MCF 10A (cell line): ENCODE measurements at regions of chr1 and their contacts with region 1.

Region 1: GRCh38 chr1:98749152-98749756 is 87.7 kb downstream of the SNX7 start:
- DNase-seq: peak; percentile 25
- H3K4me3 Mint-ChIP-seq: no peak overlapping the region
- H3K27ac Mint-ChIP-seq: no peak overlapping the region
- H3K4me1 Mint-ChIP-seq: no peaks in the 10 kb centered on the region
- H3K27me3 Mint-ChIP-seq: no peaks in the 10 kb centered on the region
- CTCF ChIP-seq: peak; percentile 37

Region 2: DNA sequence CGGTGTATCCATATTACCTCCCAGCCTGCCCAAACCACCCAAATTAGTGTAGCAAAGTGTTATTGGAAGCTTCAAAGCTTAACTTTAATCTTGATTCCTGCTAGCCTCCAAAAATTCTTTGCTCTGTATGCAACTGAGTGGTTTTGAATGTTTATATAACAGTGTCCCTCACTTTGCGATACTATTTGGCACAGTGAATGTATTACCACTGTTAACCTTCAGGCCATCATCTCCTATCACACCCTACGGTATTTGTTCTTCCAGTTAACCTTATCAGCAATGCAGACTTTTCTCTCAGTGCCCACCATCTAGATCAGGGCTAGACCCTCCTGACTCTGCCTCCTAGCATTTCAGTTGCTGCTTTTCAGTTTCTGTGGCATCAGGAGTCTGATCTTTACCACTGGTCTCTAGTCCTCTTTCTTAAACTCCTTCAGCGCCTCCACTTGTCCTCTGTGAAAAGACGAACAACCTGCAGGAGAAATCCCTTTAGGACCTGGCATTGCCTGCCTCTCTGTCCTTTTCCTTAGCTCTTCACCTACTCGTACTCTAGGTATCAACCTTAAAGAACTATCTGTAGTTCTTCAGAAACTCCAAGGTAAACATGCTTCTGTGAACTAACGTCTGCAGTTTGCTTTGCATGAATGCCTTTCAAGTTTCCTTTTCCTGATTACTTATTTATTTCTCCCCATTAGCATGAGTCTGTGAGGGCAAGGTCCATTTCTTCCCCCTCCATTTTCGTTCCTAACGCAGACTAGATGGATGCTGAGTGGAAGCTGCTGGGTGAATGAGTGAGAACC is 16.1 kb before region 1 on chr1:
- CTCF ChIA-PET with region 1: interaction called, 12 read pairs
- POLR2A ChIA-PET with region 1: no interaction called
- intact Hi-C with region 1: no loop called
- DNase-seq: no peak
- H3K4me3 Mint-ChIP-seq: no peak overlapping the region
- H3K27ac Mint-ChIP-seq: no peak overlapping the region
- H3K4me1 Mint-ChIP-seq: peaks cover 12% of the 10 kb centered on the region
- H3K27me3 Mint-ChIP-seq: no peaks in the 10 kb centered on the region
- CTCF ChIP-seq: no peak

Region 3: DNA sequence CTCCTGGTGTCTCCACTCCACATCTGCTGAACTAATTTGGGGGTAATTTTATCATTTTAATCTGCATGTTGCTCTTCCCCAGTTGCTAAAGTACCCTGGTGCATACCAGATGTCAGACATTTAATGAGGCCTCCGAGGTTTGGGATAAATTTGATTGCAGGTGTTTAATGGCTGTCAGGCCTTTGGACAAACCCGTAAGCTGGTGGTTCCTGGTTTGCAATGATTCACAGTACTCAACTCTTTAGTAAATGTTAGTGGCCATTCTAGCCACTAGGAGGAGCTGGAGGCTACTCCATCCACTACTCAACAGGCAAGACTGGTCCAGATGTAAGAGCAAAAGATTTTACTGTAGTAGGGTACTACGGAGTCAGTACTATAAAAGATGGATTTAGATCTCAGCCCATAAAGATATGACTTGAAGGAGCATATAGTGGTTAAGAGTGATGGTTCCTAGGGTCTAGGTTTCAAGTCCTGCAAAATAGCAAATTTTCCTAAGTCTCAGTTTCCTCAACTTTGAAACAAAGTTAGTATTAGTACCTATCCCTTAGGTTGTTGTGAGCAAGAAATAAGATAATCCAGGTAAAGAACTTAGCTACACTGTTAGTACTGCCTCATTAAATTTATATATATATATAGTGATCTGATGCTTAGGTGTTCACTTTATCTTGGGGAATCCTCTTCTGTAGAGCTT is 45.1 kb after region 1 on chr1:
- CTCF ChIA-PET with region 1: interaction called, 11 read pairs
- POLR2A ChIA-PET with region 1: no interaction called
- intact Hi-C with region 1: no loop called
- DNase-seq: peak; percentile 79
- H3K4me3 Mint-ChIP-seq: no peak overlapping the region
- H3K27ac Mint-ChIP-seq: no peak overlapping the region
- H3K4me1 Mint-ChIP-seq: peaks cover 5% of the 10 kb centered on the region
- H3K27me3 Mint-ChIP-seq: no peaks in the 10 kb centered on the region
- CTCF ChIP-seq: peak; percentile 72

Region 4: DNA sequence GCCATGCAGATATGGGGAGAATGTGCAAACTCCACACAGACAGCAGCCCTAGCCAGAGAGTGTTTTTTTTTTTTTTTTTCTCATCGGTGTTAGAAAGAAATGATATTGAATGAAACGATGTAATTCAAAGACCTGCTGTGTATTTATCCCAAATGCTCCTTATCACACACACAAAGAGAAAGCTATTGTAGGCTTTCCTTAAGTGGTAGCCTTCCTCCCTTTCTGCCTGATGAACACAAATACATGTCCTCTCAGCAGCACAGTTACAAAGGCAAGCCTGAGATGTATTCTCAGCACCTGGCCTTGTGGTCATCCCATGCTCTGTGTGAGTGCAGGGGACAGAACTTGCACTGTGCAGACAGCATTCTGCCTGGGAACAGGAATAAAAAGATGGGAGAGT is 161.6 kb after region 1 on chr1:
- CTCF ChIA-PET with region 1: no interaction called
- POLR2A ChIA-PET with region 1: no interaction called
- intact Hi-C with region 1: no loop called
- DNase-seq: no peak
- H3K4me3 Mint-ChIP-seq: no peak overlapping the region
- H3K27ac Mint-ChIP-seq: no peak overlapping the region
- H3K4me1 Mint-ChIP-seq: no peaks in the 10 kb centered on the region
- H3K27me3 Mint-ChIP-seq: no peaks in the 10 kb centered on the region
- CTCF ChIP-seq: no peak